ENCODE measurements at regions of chr16 and their contacts with region 1.

Region 1: GRCh38 chr16:1890708-1891050 is 18.7 kb upstream of the MEIOB start:
- DNase-seq: no peak
- ATAC-seq: no peak

Region 2: DNA sequence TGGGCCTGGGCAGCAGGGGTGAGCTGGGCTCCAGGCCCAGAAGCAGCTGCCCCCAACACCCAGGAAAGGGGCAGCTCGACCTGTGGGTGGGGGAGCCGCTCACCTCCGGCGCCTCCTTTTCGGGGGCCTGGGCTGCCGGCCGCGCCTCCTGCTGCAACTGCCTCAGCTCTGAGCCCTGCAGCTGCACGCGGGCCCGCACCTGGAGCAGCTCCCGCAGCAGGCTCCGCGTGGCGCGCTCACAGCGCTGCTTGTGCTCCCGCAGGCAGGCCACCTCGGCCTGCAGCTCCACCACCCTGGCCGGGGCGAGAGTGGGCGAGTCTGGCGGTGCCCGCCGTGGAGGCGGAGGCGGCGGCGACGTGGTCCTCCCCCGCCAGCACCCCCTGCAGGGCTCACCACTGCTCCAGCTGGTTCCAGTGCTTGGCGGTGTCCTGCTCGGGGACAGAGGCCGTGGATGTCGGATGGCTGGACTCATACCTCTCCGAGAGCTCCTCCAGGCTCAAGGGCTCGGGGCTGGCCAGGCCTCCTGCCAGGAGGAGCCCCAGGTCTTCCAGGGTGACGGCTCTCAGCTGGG is 447.2 kb before region 1 on chr16:
- intact Hi-C with region 1: no loop called
- DNase-seq: no peak
- ATAC-seq: no peak

Region 3: DNA sequence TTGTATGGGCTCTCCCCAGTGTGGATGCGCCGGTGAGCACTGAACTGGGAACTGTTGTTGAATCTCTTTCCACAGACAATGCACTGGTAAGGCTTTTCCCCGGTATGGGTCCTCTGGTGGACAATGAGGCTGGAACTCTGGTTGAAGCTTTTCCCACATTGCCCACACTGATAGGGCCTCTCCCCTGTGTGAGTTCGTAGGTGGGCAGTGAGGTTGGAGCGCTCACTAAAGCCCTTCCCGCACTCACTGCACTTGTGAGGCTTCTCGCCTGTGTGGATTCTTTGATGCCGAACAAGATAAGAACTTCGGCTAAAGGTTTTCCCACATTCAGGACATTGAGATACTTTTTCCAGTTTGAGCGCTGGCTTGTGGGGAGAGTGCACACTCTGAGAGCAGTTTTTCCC is 1492.4 kb after region 1 on chr16:
- intact Hi-C with region 1: loop called (anchors 5 kb)
- DNase-seq: no peak
- ATAC-seq: no peak